ENCODE measurements at regions of chr3 and their contacts with region 1.

Region 1: DNA sequence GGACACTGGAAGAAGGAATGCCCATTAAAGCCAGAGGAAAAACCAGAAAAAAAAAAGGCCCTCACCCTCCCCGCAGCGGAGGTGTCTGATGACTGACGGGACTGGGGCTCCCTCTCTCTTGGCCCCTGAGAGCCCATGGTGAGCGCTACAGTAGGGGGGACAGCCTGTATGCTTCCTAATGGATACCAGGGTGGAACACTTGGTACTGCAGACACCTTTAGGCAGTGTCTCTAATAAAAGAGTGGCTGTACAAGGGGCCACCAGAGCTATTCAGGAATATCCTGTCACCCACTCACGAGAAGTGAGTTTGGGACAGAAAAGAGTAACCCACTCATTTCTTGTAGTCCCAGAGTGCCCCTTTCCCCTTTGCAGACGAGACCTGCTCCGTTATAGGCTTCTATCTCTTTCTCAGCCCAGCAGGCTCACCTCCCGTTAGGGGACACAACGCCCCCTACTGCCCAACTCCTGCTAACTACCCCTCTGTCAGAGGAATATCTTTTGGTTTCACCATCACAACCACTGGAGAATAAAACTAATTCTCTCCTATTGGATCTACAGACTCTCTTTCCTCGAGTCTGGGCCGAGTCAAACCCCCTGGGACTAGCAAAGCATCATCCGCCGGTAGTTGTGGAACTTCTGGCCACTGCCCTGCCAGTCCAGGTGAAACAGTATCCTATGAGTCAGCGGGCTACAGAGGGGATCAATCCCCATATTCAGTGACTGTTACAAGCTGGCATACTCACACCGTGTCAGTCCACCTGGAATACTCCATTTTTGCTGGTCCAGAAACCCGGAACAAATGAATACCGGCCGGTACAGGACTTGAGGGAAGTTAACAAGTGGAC is 40.8 kb downstream of the ZBTB11 start:
- DNase-seq: peak; percentile 53 to 55
- ATAC-seq: peak; percentile 67 to 86 (median 82)
- H3K4me3 ChIP-seq: no peak overlapping the region
- H3K27ac ChIP-seq: no peak overlapping the region
- H3K4me1 ChIP-seq: peaks cover 0 to 9% (median 0%) of the 10 kb centered on the region in 9 donors
- H3K27me3 ChIP-seq: no peaks in the 10 kb centered on the region
- CTCF ChIP-seq: peak; percentile 54 to 73 (median 70)

Region 2: DNA sequence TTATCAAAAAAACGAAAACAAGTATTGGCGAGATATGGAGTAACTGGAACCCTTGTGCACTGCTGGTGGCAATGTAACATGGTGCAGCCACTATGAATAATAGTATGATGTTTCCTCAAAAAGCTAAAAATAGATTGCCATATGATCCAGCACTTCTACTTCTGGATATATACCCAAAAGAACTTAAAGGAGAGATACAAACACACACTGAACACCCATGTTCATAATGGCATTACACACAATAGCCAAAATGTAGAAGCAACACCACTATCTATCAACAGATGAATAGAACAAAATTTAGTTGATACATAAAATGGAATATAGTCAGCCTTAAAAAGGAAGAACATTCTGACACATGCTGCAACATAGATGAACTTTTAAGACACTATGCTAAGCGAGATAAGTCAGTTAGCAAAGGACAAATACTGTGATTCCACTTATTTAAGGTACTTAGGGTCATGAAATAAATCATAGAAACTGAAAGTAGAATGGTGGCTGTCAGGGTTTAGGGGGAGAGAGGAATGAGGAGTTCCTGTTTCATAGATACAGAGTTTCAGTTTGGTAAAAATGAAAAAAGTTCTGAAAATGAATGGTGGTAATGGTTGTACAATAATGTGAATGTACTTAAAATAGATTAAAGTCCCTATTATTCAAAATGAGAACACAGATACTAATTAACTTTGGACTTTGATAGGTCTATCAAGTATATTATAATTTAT is 256.4 kb before region 1 on chr3:
- intact Hi-C with region 1: no loop called
- DNase-seq: no peak
- ATAC-seq: no peak
- H3K4me3 ChIP-seq: no peak overlapping the region
- H3K27ac ChIP-seq: peak overlapping the region in 4 of 10 donors; percentile 16 to 40 (median 37)
- H3K4me1 ChIP-seq: peaks cover 5 to 33% (median 17%) of the 10 kb centered on the region in 9 donors
- H3K27me3 ChIP-seq: no peaks in the 10 kb centered on the region
- CTCF ChIP-seq: no peak

Region 3: GRCh38 chr3:101588616-101589015 is 47.6 kb before region 1 on chr3:
- intact Hi-C with region 1: loop called in 1 of 10 experiments (anchors 5 kb)
- DNase-seq: no peak
- ATAC-seq: no peak
- H3K4me3 ChIP-seq: no peak overlapping the region
- H3K27ac ChIP-seq: no peak overlapping the region
- H3K4me1 ChIP-seq: peaks cover 0 to 24% (median 8%) of the 10 kb centered on the region in 9 donors
- H3K27me3 ChIP-seq: no peaks in the 10 kb centered on the region
- CTCF ChIP-seq: no peak